Ascending aorta (tissue), 2 donors: ENCODE measurements at regions of chr1 and their contacts with region 1.

Region 1: GRCh38 chr1:119870917-119871596 is 25.3 kb downstream of the ADAM30 start:
- DNase-seq: peak in 1 of 2 donors; percentile 88
- H3K4me3 ChIP-seq: peak overlapping the region; percentile 37 to 58
- H3K27ac ChIP-seq: peak overlapping the region; percentile 17 to 38
- H3K4me1 ChIP-seq: peaks cover 4 to 9% of the 10 kb centered on the region in 2 donors
- H3K27me3 ChIP-seq: no peaks in the 10 kb centered on the region
- CTCF ChIP-seq: peak; percentile 88 to 99 (median 95)

Region 2: GRCh38 chr1:119636491-119637089 is 234.5 kb before region 1 on chr1:
- intact Hi-C with region 1: no loop called
- DNase-seq: no peak
- H3K4me3 ChIP-seq: no peak overlapping the region
- H3K27ac ChIP-seq: no peak overlapping the region
- H3K4me1 ChIP-seq: peaks cover 6 to 8% of the 10 kb centered on the region in 2 donors
- H3K27me3 ChIP-seq: no peaks in the 10 kb centered on the region
- CTCF ChIP-seq: no peak

Region 3: DNA sequence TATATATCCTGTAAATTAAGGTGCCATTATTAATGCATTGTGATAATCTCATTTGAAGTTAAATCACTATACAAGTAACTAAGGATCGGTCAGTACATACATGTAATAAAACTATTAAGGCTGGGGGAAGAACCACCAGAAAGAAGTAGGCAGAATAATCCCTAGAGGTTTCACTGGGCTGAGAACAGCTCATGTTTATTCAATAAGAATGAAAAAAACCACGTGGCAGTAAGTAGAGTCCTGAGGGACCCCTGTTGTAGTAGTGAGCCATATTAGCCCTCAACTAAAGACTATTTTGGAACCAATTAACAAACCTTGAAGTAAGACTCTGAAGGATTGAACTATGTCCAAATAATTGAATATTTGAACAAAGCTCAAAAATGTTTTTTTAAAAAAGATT is 72.2 kb after region 1 on chr1:
- intact Hi-C with region 1: loop called (anchors 5 kb)
- DNase-seq: no peak
- H3K4me3 ChIP-seq: no peak overlapping the region
- H3K27ac ChIP-seq: peak overlapping the region in 1 of 2 donors; percentile 3
- H3K4me1 ChIP-seq: peaks cover 0 to 5% of the 10 kb centered on the region in 2 donors
- H3K27me3 ChIP-seq: no peaks in the 10 kb centered on the region
- CTCF ChIP-seq: no peak

Region 4: GRCh38 chr1:119987112-119987511 is 116.1 kb after region 1 on chr1:
- intact Hi-C with region 1: no loop called
- DNase-seq: peak in 1 of 2 donors; percentile 68
- H3K4me3 ChIP-seq: no peak overlapping the region
- H3K27ac ChIP-seq: peak overlapping the region; percentile 69 to 70
- H3K4me1 ChIP-seq: peaks cover 12 to 21% of the 10 kb centered on the region in 2 donors
- H3K27me3 ChIP-seq: no peaks in the 10 kb centered on the region
- CTCF ChIP-seq: no peak